Naive thymus-derived CD4-positive, alpha-beta T cell (primary cell): ENCODE measurements at regions of chr1 and their contacts with region 1.

Region 1: GRCh38 chr1:173429471-173430402 is 47.4 kb upstream of the PRDX6 start:
- DNase-seq: peak; percentile 36 to 66 (median 54)
- ATAC-seq: peak; percentile 87
- H3K4me3 ChIP-seq: peak overlapping the region; percentile 9
- H3K4me3 Mint-ChIP-seq: peak overlapping the region; percentile 29 to 76 (median 60)
- H3K27ac ChIP-seq: peak overlapping the region; percentile 43
- H3K27ac Mint-ChIP-seq: peak overlapping the region; percentile 23 to 86 (median 51)
- H3K4me1 ChIP-seq: peaks cover 14% of the 10 kb centered on the region in 2 donors
- H3K4me1 Mint-ChIP-seq: peaks cover 13 to 35% (median 24%) of the 10 kb centered on the region in 7 donors
- H3K27me3 ChIP-seq: no peaks in the 10 kb centered on the region
- H3K27me3 Mint-ChIP-seq: no peaks in the 10 kb centered on the region

Region 2: GRCh38 chr1:173002891-173003838 is 426.6 kb before region 1 on chr1:
- CTCF ChIA-PET with region 1: no interaction called
- POLR2A ChIA-PET with region 1: no interaction called
- intact Hi-C with region 1: no loop called
- DNase-seq: no peak
- ATAC-seq: no peak
- H3K4me3 ChIP-seq: no peak overlapping the region
- H3K4me3 Mint-ChIP-seq: no peak overlapping the region
- H3K27ac ChIP-seq: no peak overlapping the region
- H3K27ac Mint-ChIP-seq: no peak overlapping the region
- H3K4me1 ChIP-seq: no peaks in the 10 kb centered on the region
- H3K4me1 Mint-ChIP-seq: peaks cover 2 to 17% (median 14%) of the 10 kb centered on the region in 7 donors
- H3K27me3 ChIP-seq: no peaks in the 10 kb centered on the region
- H3K27me3 Mint-ChIP-seq: peaks cover 0 to 5% (median 0%) of the 10 kb centered on the region in 5 donors

Region 3: GRCh38 chr1:173554541-173555250 is 125.0 kb after region 1 on chr1:
- CTCF ChIA-PET with region 1: no interaction called
- POLR2A ChIA-PET with region 1: no interaction called
- intact Hi-C with region 1: loop called in 1 of 2 experiments (anchors 5 kb)
- DNase-seq: no peak
- ATAC-seq: no peak
- H3K4me3 ChIP-seq: no peak overlapping the region
- H3K4me3 Mint-ChIP-seq: no peak overlapping the region
- H3K27ac ChIP-seq: no peak overlapping the region
- H3K27ac Mint-ChIP-seq: no peak overlapping the region
- H3K4me1 ChIP-seq: peaks cover 29 to 31% of the 10 kb centered on the region in 2 donors
- H3K4me1 Mint-ChIP-seq: peaks cover 21 to 66% (median 43%) of the 10 kb centered on the region in 7 donors
- H3K27me3 ChIP-seq: no peaks in the 10 kb centered on the region
- H3K27me3 Mint-ChIP-seq: no peaks in the 10 kb centered on the region

Region 4: GRCh38 chr1:173714759-173715537 is 285.2 kb after region 1 on chr1 and contains the start of gene KLHL20:
- CTCF ChIA-PET with region 1: interaction called, 9 read pairs
- POLR2A ChIA-PET with region 1: interaction called, 6 read pairs
- intact Hi-C with region 1: loop called (anchors 1 kb)
- DNase-seq: peak; percentile 60 to 92 (median 89)
- ATAC-seq: peak; percentile 98
- H3K4me3 ChIP-seq: peak within 1 kb of the TSS; percentile 77
- H3K4me3 Mint-ChIP-seq: peak within 1 kb of the TSS; percentile 90 to 100 (median 96)
- H3K27ac ChIP-seq: peak within 1 kb of the TSS; percentile 78
- H3K27ac Mint-ChIP-seq: peak within 1 kb of the TSS; percentile 89 to 99 (median 94)
- H3K4me1 ChIP-seq: peaks cover 11 to 18% of the 10 kb centered on the region in 2 donors
- H3K4me1 Mint-ChIP-seq: peaks cover 14 to 48% (median 35%) of the 10 kb centered on the region in 7 donors
- H3K27me3 ChIP-seq: no peaks in the 10 kb centered on the region
- H3K27me3 Mint-ChIP-seq: peaks cover 14 to 32% (median 19%) of the 10 kb centered on the region in 5 donors
- total RNA-seq, gene KLHL20: 28.3 to 40.9 (median 32.8) TPM

Region 5: DNA sequence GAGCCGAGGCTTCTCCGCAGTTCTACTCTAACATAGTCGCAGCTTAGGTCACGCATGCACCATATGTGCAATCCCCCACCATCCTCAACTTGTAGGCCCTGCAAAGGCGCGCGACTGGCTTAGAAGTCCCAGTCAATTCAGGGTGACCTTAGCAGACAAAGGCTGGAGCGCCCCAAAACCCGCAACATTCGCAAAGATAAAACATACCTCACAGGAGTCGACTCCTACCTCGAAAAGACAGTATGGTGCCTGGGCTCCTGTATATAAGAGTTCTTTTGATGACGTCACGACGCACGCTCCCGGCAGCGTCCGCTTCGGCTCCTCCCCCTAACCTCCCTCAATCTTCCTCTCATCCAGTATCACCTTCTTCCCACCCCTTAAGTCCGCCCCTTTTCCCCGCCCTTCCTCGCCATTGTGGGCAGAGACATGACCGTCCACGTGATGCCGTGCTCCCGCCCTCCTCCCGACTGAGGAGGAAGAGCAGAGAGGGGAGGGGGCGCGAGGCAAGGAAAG is 438.1 kb after region 1 on chr1 and contains the start of gene GAS5:
- CTCF ChIA-PET with region 1: interaction called, 3 read pairs
- POLR2A ChIA-PET with region 1: interaction called, 3 read pairs
- intact Hi-C with region 1: loop called (anchors 1 to 2 kb)
- DNase-seq: peak; percentile 88 to 100 (median 99)
- ATAC-seq: peak; percentile 92
- H3K4me3 ChIP-seq: peak within 1 kb of the TSS; percentile 88
- H3K4me3 Mint-ChIP-seq: peak within 1 kb of the TSS; percentile 92 to 98 (median 95)
- H3K27ac ChIP-seq: peak within 1 kb of the TSS; percentile 93
- H3K27ac Mint-ChIP-seq: peak within 1 kb of the TSS; percentile 85 to 99 (median 97)
- H3K4me1 ChIP-seq: peaks cover 42 to 62% of the 10 kb centered on the region in 2 donors
- H3K4me1 Mint-ChIP-seq: peaks cover 50 to 80% (median 66%) of the 10 kb centered on the region in 7 donors
- H3K27me3 ChIP-seq: no peaks in the 10 kb centered on the region
- H3K27me3 Mint-ChIP-seq: peaks cover 0 to 4% (median 0%) of the 10 kb centered on the region in 5 donors
- total RNA-seq, gene GAS5: 371 to 954 (median 885) TPM

Region 6: GRCh38 chr1:174159252-174160108 is 729.7 kb after region 1 on chr1 and contains the start of gene RABGAP1L:
- CTCF ChIA-PET with region 1: no interaction called
- POLR2A ChIA-PET with region 1: no interaction called
- intact Hi-C with region 1: loop called in 1 of 2 experiments (anchors 10 kb)
- DNase-seq: peak; percentile 87 to 95 (median 93)
- ATAC-seq: peak; percentile 96
- H3K4me3 ChIP-seq: peak within 1 kb of the TSS; percentile 72
- H3K4me3 Mint-ChIP-seq: peak within 1 kb of the TSS; percentile 92 to 100 (median 96)
- H3K27ac ChIP-seq: peak within 1 kb of the TSS; percentile 87
- H3K27ac Mint-ChIP-seq: peak within 1 kb of the TSS; percentile 86 to 98 (median 98)
- H3K4me1 ChIP-seq: peaks cover 9 to 20% of the 10 kb centered on the region in 2 donors
- H3K4me1 Mint-ChIP-seq: peaks cover 31 to 59% (median 53%) of the 10 kb centered on the region in 7 donors
- H3K27me3 ChIP-seq: no peaks in the 10 kb centered on the region
- H3K27me3 Mint-ChIP-seq: no peaks in the 10 kb centered on the region
- total RNA-seq, gene RABGAP1L: 51.9 to 97.4 (median 74.3) TPM